ENCODE measurements at regions of chr18 and their contacts with region 1.

Region 1: GRCh38 chr18:36129300-36130038 is at the starts of genes ELP2 and SLC39A6:
- DNase-seq: peak; percentile 89 to 98 (median 95)
- ATAC-seq: peak; percentile 94
- H3K4me3 ChIP-seq: peak within 1 kb of the TSS; percentile 99
- H3K4me3 Mint-ChIP-seq: peak within 1 kb of the TSS; percentile 87 to 98 (median 95)
- H3K27ac ChIP-seq: peak within 1 kb of the TSS; percentile 96
- H3K27ac Mint-ChIP-seq: peak within 1 kb of the TSS; percentile 93 to 99 (median 98)
- H3K4me1 ChIP-seq: peaks cover 33 to 35% of the 10 kb centered on the region in 2 donors
- H3K4me1 Mint-ChIP-seq: peaks cover 39 to 81% (median 61%) of the 10 kb centered on the region in 7 donors
- H3K27me3 ChIP-seq: no peaks in the 10 kb centered on the region
- H3K27me3 Mint-ChIP-seq: no peaks in the 10 kb centered on the region
- total RNA-seq, gene ELP2: 79.3 to 177 (median 150) TPM
- total RNA-seq, gene SLC39A6: 12.1 to 25.2 (median 16.6) TPM

Region 2: GRCh38 chr18:34976899-34977837 is 1152.3 kb before region 1 on chr18:
- CTCF ChIA-PET with region 1: interaction called, 6 read pairs
- POLR2A ChIA-PET with region 1: no interaction called
- intact Hi-C with region 1: loop called in 1 of 2 experiments (anchors 2 kb)
- DNase-seq: peak; percentile 60 to 78 (median 72)
- ATAC-seq: peak; percentile 84
- H3K4me3 ChIP-seq: peak overlapping the region; percentile 74
- H3K4me3 Mint-ChIP-seq: peak overlapping the region; percentile 89 to 99 (median 94)
- H3K27ac ChIP-seq: peak overlapping the region; percentile 54
- H3K27ac Mint-ChIP-seq: peak overlapping the region in 6 of 9 donors; percentile 24 to 72 (median 39)
- H3K4me1 ChIP-seq: no peaks in the 10 kb centered on the region
- H3K4me1 Mint-ChIP-seq: peaks cover 18 to 37% (median 24%) of the 10 kb centered on the region in 7 donors
- H3K27me3 ChIP-seq: peaks cover 0 to 3% of the 10 kb centered on the region in 2 donors
- H3K27me3 Mint-ChIP-seq: peaks cover 0 to 66% (median 0%) of the 10 kb centered on the region in 5 donors

Region 3: DNA sequence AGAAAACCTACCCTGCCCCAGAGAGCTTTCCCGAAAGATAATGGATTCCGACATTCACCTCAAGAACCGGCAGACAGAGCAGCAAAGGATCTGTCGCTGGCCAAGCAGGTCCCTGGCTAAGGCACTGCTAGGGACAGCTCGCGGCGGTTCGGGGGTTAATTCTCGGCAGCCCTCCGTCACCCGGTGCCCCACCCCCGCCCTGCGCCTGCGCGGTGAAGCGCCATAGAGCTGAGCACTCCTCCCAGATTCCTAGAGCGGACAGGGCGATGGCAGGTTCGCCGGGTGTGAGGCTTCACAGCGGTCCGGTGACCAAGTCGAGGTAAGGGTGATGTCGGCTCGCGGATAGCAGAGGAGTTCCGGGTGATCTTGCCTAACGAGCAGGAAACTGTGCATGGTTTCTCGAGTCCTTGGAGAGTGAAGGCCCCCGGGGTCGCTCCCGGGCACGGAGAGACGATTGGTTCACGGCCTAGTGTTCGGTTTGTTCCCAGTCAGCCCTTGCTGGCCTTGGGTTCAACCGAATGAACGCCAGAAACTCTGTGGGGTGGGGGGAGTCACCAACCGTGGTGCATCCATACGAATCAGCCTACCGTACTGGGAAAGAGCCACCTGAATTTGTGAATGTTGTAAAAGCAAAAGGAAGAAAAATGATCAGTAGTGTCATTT is 839.3 kb before region 1 on chr18 and contains the start of gene ZSCAN30:
- CTCF ChIA-PET with region 1: no interaction called
- POLR2A ChIA-PET with region 1: no interaction called
- intact Hi-C with region 1: loop called (anchors 1 kb)
- DNase-seq: peak; percentile 90 to 96 (median 94)
- ATAC-seq: peak; percentile 99
- H3K4me3 ChIP-seq: peak within 1 kb of the TSS; percentile 90
- H3K4me3 Mint-ChIP-seq: peak within 1 kb of the TSS; percentile 97 to 99 (median 98)
- H3K27ac ChIP-seq: peak within 1 kb of the TSS; percentile 86
- H3K27ac Mint-ChIP-seq: peak within 1 kb of the TSS; percentile 94 to 100 (median 98)
- H3K4me1 ChIP-seq: peaks cover 16 to 18% of the 10 kb centered on the region in 2 donors
- H3K4me1 Mint-ChIP-seq: peaks cover 29 to 86% (median 75%) of the 10 kb centered on the region in 7 donors
- H3K27me3 ChIP-seq: no peaks in the 10 kb centered on the region
- H3K27me3 Mint-ChIP-seq: no peaks in the 10 kb centered on the region
- total RNA-seq, gene ZSCAN30: 14.0 to 23.2 (median 20.8) TPM

Region 4: GRCh38 chr18:36015629-36016028 is 113.8 kb before region 1 on chr18:
- CTCF ChIA-PET with region 1: no interaction called
- POLR2A ChIA-PET with region 1: no interaction called
- intact Hi-C with region 1: loop called (anchors 1 to 10 kb)
- DNase-seq: no peak
- ATAC-seq: no peak
- H3K4me3 ChIP-seq: no peak overlapping the region
- H3K4me3 Mint-ChIP-seq: no peak overlapping the region
- H3K27ac ChIP-seq: no peak overlapping the region
- H3K27ac Mint-ChIP-seq: no peak overlapping the region
- H3K4me1 ChIP-seq: no peaks in the 10 kb centered on the region
- H3K4me1 Mint-ChIP-seq: peaks cover 0 to 17% (median 5%) of the 10 kb centered on the region in 7 donors
- H3K27me3 ChIP-seq: no peaks in the 10 kb centered on the region
- H3K27me3 Mint-ChIP-seq: no peaks in the 10 kb centered on the region

Region 5: GRCh38 chr18:36095936-36096519 is 33.4 kb before region 1 on chr18:
- CTCF ChIA-PET with region 1: no interaction called
- POLR2A ChIA-PET with region 1: no interaction called
- intact Hi-C with region 1: loop called in 1 of 2 experiments (anchors 2 kb)
- DNase-seq: peak in 7 of 9 donors; percentile 12 to 53 (median 37)
- ATAC-seq: peak; percentile 60
- H3K4me3 ChIP-seq: no peak overlapping the region
- H3K4me3 Mint-ChIP-seq: no peak overlapping the region
- H3K27ac ChIP-seq: no peak overlapping the region
- H3K27ac Mint-ChIP-seq: no peak overlapping the region
- H3K4me1 ChIP-seq: no peaks in the 10 kb centered on the region
- H3K4me1 Mint-ChIP-seq: peaks cover 0 to 11% (median 4%) of the 10 kb centered on the region in 7 donors
- H3K27me3 ChIP-seq: no peaks in the 10 kb centered on the region
- H3K27me3 Mint-ChIP-seq: peaks cover 0 to 21% (median 4%) of the 10 kb centered on the region in 5 donors

Region 6: GRCh38 chr18:36186911-36187834 is 57.7 kb after region 1 on chr18 and contains the start of gene MOCOS:
- CTCF ChIA-PET with region 1: interaction called, 3 read pairs
- POLR2A ChIA-PET with region 1: no interaction called
- intact Hi-C with region 1: loop called in 1 of 2 experiments (anchors 1 kb)
- DNase-seq: peak in 6 of 9 donors; percentile 16 to 71 (median 22)
- ATAC-seq: peak; percentile 76
- H3K4me3 ChIP-seq: peak within 1 kb of the TSS; percentile 77
- H3K4me3 Mint-ChIP-seq: peak within 1 kb of the TSS; percentile 74 to 87 (median 83)
- H3K27ac ChIP-seq: peak within 1 kb of the TSS; percentile 46
- H3K27ac Mint-ChIP-seq: peak within 1 kb of the TSS in 1 of 9 donors; percentile 38
- H3K4me1 ChIP-seq: peaks cover 4 to 5% of the 10 kb centered on the region in 2 donors
- H3K4me1 Mint-ChIP-seq: peaks cover 7 to 25% (median 11%) of the 10 kb centered on the region in 7 donors
- H3K27me3 ChIP-seq: peaks cover 0 to 3% of the 10 kb centered on the region in 2 donors
- H3K27me3 Mint-ChIP-seq: peaks cover 20 to 35% (median 24%) of the 10 kb centered on the region in 5 donors
- total RNA-seq, gene MOCOS: 0.05 TPM in 1 of 5 experiments, not detected in the others

Region 7: DNA sequence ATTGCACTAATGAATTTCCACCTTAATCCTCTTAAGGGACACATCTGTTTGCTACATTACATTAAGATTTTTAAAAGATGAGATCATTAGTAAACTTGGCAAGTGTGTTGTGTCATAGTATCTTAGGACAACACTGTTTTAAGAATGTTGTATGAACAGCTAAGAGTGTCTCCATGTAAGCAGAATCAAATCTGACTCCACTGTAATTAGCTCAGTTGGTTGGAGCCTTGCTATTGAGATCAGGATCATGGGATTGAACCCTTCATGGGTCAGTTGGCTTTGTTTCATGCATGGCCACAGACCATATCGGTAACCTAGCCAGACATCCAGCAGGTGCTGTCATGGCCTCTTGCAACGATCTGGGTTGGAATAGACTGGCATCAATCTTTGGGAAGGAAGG is 173.2 kb after region 1 on chr18:
- CTCF ChIA-PET with region 1: no interaction called
- POLR2A ChIA-PET with region 1: no interaction called
- intact Hi-C with region 1: no loop called
- DNase-seq: no peak
- ATAC-seq: no peak
- H3K4me3 ChIP-seq: no peak overlapping the region
- H3K4me3 Mint-ChIP-seq: no peak overlapping the region
- H3K27ac ChIP-seq: no peak overlapping the region
- H3K27ac Mint-ChIP-seq: no peak overlapping the region
- H3K4me1 ChIP-seq: no peaks in the 10 kb centered on the region
- H3K4me1 Mint-ChIP-seq: peaks cover 0 to 5% (median 0%) of the 10 kb centered on the region in 7 donors
- H3K27me3 ChIP-seq: peaks cover 3 to 7% of the 10 kb centered on the region in 2 donors
- H3K27me3 Mint-ChIP-seq: peaks cover 59 to 74% (median 70%) of the 10 kb centered on the region in 5 donors